CD4-positive, alpha-beta T cell (primary cell): ENCODE measurements at regions of chr3 and their contacts with region 1.

Region 1: GRCh38 chr3:111717601-111718000 is 122.5 kb upstream of the ZBED2 start:
- DNase-seq: peak; percentile 36 to 85 (median 54)
- ATAC-seq: peak; percentile 96
- H3K4me3 ChIP-seq: no peak overlapping the region
- H3K4me3 Mint-ChIP-seq: no peak overlapping the region
- H3K27ac ChIP-seq: no peak overlapping the region
- H3K27ac Mint-ChIP-seq: no peak overlapping the region
- H3K4me1 ChIP-seq: no peaks in the 10 kb centered on the region
- H3K4me1 Mint-ChIP-seq: no peaks in the 10 kb centered on the region
- H3K27me3 ChIP-seq: no peaks in the 10 kb centered on the region
- H3K27me3 Mint-ChIP-seq: no peaks in the 10 kb centered on the region
- CTCF ChIP-seq: peak; percentile 90

Region 2: GRCh38 chr3:111967651-111968274 is 250.2 kb after region 1 on chr3:
- CTCF ChIA-PET with region 1: interaction called, 40 read pairs
- POLR2A ChIA-PET with region 1: interaction called, 6 read pairs
- intact Hi-C with region 1: loop called (anchors 1 kb)
- DNase-seq: peak; percentile 62 to 88 (median 72)
- ATAC-seq: peak; percentile 97
- H3K4me3 ChIP-seq: no peak overlapping the region
- H3K4me3 Mint-ChIP-seq: no peak overlapping the region
- H3K27ac ChIP-seq: no peak overlapping the region
- H3K27ac Mint-ChIP-seq: no peak overlapping the region
- H3K4me1 ChIP-seq: no peaks in the 10 kb centered on the region
- H3K4me1 Mint-ChIP-seq: peaks cover 5% of the 10 kb centered on the region
- H3K27me3 ChIP-seq: no peaks in the 10 kb centered on the region
- H3K27me3 Mint-ChIP-seq: no peaks in the 10 kb centered on the region
- CTCF ChIP-seq: peak; percentile 96